CD4-positive, alpha-beta memory T cell (primary cell): ENCODE measurements at regions of chr6 and their contacts with region 1.

Region 1: DNA sequence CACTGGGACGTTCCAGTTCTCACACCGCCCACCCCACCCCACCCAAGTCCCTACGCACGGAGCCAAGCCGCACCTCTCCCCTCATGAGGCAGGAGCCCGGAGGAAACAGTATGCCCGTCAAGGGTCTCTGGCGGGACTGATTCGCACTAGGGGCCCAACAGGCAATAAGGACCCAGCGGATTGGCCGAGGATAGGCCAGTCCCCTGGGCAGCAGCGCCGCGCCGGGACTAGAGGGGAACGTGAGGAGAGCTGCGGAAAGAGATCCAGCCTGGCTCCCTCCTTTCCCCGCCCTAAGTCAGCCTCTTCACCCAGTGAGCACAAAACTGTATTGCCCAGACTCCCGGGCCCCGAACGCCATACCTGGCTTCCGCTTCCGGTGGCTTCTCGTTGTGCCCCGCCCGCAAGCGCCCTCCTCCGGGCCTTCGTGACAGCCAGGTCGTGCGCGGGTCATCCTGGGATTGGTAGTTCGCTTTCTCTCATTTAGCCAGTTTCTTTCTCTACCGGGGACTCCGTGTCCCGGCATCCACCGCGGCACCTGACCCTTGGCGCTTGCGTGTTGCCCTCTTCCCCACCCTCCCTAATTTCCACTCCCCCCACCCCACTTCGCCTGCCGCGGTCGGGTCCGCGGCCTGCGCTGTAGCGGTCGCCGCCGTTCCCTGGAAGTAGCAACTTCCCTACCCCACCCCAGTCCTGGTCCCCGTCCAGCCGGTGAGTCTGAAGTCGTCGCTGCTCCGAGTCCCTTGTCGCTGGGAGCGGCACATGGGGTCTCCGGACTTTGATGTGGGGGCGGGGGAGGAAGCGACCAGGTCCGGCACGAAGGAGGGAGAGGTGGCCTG is at the start of gene CSNK2B:
- DNase-seq: peak; percentile 97 to 99 (median 98)
- H3K4me3 ChIP-seq: peak within 1 kb of the TSS; percentile 94 to 96
- H3K4me3 Mint-ChIP-seq: peak within 1 kb of the TSS; percentile 89 to 100 (median 96)
- H3K27ac ChIP-seq: peak within 1 kb of the TSS; percentile 92
- H3K27ac Mint-ChIP-seq: peak within 1 kb of the TSS; percentile 94 to 100 (median 99)
- H3K4me1 ChIP-seq: peaks cover 59% of the 10 kb centered on the region
- H3K4me1 Mint-ChIP-seq: peaks cover 32 to 67% (median 49%) of the 10 kb centered on the region in 4 donors
- H3K27me3 ChIP-seq: no peaks in the 10 kb centered on the region
- H3K27me3 Mint-ChIP-seq: no peaks in the 10 kb centered on the region
- total RNA-seq, gene CSNK2B: 141 to 148 TPM

Region 2: GRCh38 chr6:31541658-31542521 is 123.8 kb before region 1 on chr6 and contains the start of gene DDX39B:
- CTCF ChIA-PET with region 1: interaction called, 3 read pairs
- POLR2A ChIA-PET with region 1: interaction called, 10 read pairs
- intact Hi-C with region 1: loop called (anchors 1 kb)
- DNase-seq: peak; percentile 95 to 97 (median 96)
- H3K4me3 ChIP-seq: peak within 1 kb of the TSS; percentile 96 to 97
- H3K4me3 Mint-ChIP-seq: peak within 1 kb of the TSS; percentile 96 to 99 (median 98)
- H3K27ac ChIP-seq: peak within 1 kb of the TSS; percentile 94
- H3K27ac Mint-ChIP-seq: peak within 1 kb of the TSS; percentile 94 to 100 (median 99)
- H3K4me1 ChIP-seq: peaks cover 48% of the 10 kb centered on the region
- H3K4me1 Mint-ChIP-seq: peaks cover 38 to 63% (median 51%) of the 10 kb centered on the region in 4 donors
- H3K27me3 ChIP-seq: no peaks in the 10 kb centered on the region
- H3K27me3 Mint-ChIP-seq: no peaks in the 10 kb centered on the region
- total RNA-seq, gene DDX39B: 729 to 737 TPM

Region 3: GRCh38 chr6:31680840-31681671 is 15.3 kb after region 1 on chr6 and contains the start of gene LY6G5C:
- CTCF ChIA-PET with region 1: interaction called, 8 read pairs
- POLR2A ChIA-PET with region 1: interaction called, 6 read pairs
- intact Hi-C with region 1: loop called (anchors 2 kb)
- DNase-seq: peak in 4 of 5 donors; percentile 51 to 59 (median 56)
- H3K4me3 ChIP-seq: peak within 1 kb of the TSS; percentile 69 to 70
- H3K4me3 Mint-ChIP-seq: peak within 1 kb of the TSS; percentile 86 to 91 (median 90)
- H3K27ac ChIP-seq: peak within 1 kb of the TSS; percentile 51
- H3K27ac Mint-ChIP-seq: peak within 1 kb of the TSS; percentile 77 to 92 (median 86)
- H3K4me1 ChIP-seq: peaks cover 19% of the 10 kb centered on the region
- H3K4me1 Mint-ChIP-seq: peaks cover 11 to 27% (median 16%) of the 10 kb centered on the region in 4 donors
- H3K27me3 ChIP-seq: no peaks in the 10 kb centered on the region
- H3K27me3 Mint-ChIP-seq: no peaks in the 10 kb centered on the region
- total RNA-seq, gene LY6G5C: 4.4 to 4.5 TPM

Region 4: DNA sequence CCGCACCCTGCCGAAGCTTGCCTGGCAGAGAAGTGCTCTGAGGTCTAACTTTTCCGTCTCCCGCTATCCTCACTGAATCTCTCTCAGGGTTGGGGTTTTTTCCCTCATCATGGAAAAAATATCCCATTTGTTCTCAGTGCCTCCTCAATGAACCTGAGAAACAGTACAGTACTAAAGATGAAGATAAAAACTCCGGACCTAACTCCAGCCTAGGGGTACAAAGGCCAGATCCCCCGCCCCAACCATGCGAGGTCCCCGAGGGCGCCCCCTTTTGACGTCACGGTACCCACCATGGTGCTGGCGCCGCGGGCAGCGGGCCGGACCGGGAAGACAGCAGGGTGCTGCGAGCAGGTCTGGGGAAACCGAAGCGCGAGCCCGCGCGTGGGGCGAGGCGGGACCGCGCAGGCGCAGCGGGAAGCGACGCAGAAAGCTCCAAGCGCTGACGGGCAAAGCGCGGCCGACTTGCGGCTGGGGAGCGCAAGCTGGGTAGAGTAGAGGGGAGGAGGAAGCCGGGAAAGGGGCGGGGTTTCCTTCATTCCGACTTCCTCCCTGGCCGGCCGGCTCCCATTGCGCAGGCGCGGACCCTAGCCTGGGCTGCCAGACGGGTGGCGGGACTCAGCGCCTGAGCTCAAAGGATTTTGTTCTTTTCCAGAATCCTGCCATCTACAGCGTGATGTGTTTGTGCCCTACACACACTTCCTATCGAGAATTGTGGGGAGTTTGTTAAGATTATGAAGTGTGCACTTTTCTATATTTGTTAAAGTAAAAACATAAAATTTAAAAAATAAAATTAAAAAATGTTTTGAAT is 140.9 kb after region 1 on chr6 and contains the start of gene LSM2:
- CTCF ChIA-PET with region 1: interaction called, 4 read pairs
- POLR2A ChIA-PET with region 1: interaction called, 11 read pairs
- intact Hi-C with region 1: no loop called
- DNase-seq: peak; percentile 97 to 98 (median 97)
- H3K4me3 ChIP-seq: peak within 1 kb of the TSS; percentile 84 to 89
- H3K4me3 Mint-ChIP-seq: peak within 1 kb of the TSS; percentile 86 to 97 (median 90)
- H3K27ac ChIP-seq: peak within 1 kb of the TSS; percentile 80
- H3K27ac Mint-ChIP-seq: peak within 1 kb of the TSS; percentile 89 to 97 (median 93)
- H3K4me1 ChIP-seq: peaks cover 23% of the 10 kb centered on the region
- H3K4me1 Mint-ChIP-seq: peaks cover 11 to 37% (median 27%) of the 10 kb centered on the region in 4 donors
- H3K27me3 ChIP-seq: no peaks in the 10 kb centered on the region
- H3K27me3 Mint-ChIP-seq: no peaks in the 10 kb centered on the region
- total RNA-seq, gene LSM2: 30.0 to 34.6 TPM

Region 5: GRCh38 chr6:31862344-31863227 is 196.9 kb after region 1 on chr6 and contains the start of gene NEU1:
- CTCF ChIA-PET with region 1: no interaction called
- POLR2A ChIA-PET with region 1: interaction called, 22 read pairs
- intact Hi-C with region 1: loop called (anchors 1 kb)
- DNase-seq: peak; percentile 97 to 100 (median 100)
- H3K4me3 ChIP-seq: peak within 1 kb of the TSS; percentile 88 to 95
- H3K4me3 Mint-ChIP-seq: peak within 1 kb of the TSS; percentile 87 to 96 (median 94)
- H3K27ac ChIP-seq: peak within 1 kb of the TSS; percentile 90
- H3K27ac Mint-ChIP-seq: peak within 1 kb of the TSS; percentile 94 to 98 (median 97)
- H3K4me1 ChIP-seq: peaks cover 16% of the 10 kb centered on the region
- H3K4me1 Mint-ChIP-seq: peaks cover 14 to 33% (median 23%) of the 10 kb centered on the region in 4 donors
- H3K27me3 ChIP-seq: no peaks in the 10 kb centered on the region
- H3K27me3 Mint-ChIP-seq: peaks cover 0 to 2% of the 10 kb centered on the region in 2 donors
- total RNA-seq, gene NEU1: 19.6 to 21.1 TPM

Region 6: DNA sequence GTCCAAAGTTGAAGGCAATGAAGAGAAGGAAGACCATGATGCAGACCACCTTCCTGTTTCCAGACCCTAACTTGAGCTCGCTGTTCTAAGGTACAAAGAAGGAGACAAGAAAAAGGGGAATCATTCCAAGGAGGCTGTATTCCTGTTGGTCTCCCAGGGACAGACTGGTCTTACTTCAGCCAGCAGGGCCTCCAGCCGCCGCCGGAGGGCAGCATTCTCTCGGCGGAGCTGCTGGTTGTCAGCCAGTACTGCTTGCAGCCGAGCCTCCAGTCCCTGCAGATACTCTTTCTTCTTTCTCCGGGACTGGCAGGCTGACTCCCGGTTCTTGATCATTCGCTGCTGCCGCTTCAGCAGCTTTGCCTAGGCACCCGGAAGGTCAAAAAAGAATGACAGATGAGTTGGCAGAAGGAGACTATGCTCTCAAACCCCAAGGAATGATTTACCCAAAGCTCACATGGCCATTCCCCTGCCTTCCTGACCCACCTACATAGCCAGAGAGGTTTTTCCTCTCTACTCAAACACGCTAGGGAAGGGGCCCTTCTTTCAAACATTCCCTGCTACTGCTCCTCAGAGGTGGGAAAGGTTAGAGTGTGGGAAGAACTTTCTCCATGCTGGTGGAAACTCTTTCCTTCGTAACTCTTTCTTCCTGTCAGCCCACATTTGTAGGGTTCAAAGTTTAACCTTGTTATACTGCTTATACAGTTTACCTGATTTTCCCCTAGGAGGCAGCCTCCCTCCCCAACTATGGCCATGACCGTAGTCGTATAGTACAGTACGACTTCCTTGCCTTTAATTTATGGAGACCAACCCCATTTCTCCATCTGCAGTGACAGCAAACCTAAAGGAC is 453.3 kb after region 1 on chr6:
- CTCF ChIA-PET with region 1: no interaction called
- POLR2A ChIA-PET with region 1: no interaction called
- intact Hi-C with region 1: no loop called
- DNase-seq: peak in 4 of 5 donors; percentile 59 to 65 (median 63)
- H3K4me3 ChIP-seq: no peak overlapping the region
- H3K4me3 Mint-ChIP-seq: no peak overlapping the region
- H3K27ac ChIP-seq: no peak overlapping the region
- H3K27ac Mint-ChIP-seq: peak overlapping the region in 6 of 7 donors; percentile 47 to 90 (median 72)
- H3K4me1 ChIP-seq: peaks cover 8% of the 10 kb centered on the region
- H3K4me1 Mint-ChIP-seq: peaks cover 3 to 19% (median 11%) of the 10 kb centered on the region in 4 donors
- H3K27me3 ChIP-seq: no peaks in the 10 kb centered on the region
- H3K27me3 Mint-ChIP-seq: no peaks in the 10 kb centered on the region

Region 7: DNA sequence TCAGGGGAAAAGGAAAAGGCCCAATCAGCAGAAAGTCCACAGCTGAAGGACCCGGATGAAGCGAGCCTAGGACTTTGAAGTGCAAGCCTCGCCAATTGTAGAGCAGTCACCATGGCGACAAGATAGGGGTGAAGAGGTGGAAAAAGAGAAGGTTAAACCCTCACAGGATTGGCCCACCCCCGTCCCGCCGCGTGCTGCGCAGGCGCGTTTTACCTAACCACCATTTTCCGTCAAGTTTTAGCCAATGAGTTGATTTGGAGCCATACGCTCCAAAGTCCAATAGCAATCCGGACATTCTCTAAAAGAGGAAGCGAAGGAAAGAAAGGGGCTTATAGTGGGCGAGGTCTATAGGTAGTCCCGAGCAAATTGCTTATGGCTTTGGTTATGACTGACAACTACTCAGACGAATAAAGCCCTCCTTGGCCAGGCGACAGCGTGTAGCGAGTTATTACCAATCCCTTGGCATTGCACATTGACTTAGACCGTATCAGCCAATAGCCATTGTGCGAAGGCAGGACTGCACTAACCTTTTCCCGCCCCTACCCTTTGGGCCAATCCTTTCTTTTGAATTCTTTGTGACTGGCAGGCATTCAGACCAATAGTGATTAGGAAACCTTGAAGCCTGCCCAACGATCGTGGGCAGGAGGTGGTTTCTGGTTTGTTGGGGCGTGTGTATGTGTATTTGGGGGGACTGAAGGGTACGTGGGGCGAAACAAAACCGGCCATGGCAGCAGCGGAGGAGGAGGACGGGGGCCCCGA is 512.2 kb after region 1 on chr6 and contains the start of gene RNF5:
- CTCF ChIA-PET with region 1: no interaction called
- POLR2A ChIA-PET with region 1: no interaction called
- intact Hi-C with region 1: loop called (anchors 2 kb)
- DNase-seq: peak; percentile 96 to 99 (median 98)
- H3K4me3 ChIP-seq: peak within 1 kb of the TSS; percentile 74 to 87
- H3K4me3 Mint-ChIP-seq: peak within 1 kb of the TSS; percentile 92 to 100 (median 96)
- H3K27ac ChIP-seq: peak within 1 kb of the TSS; percentile 91
- H3K27ac Mint-ChIP-seq: peak within 1 kb of the TSS; percentile 97 to 100 (median 99)
- H3K4me1 ChIP-seq: peaks cover 79% of the 10 kb centered on the region
- H3K4me1 Mint-ChIP-seq: peaks cover 50 to 84% (median 66%) of the 10 kb centered on the region in 4 donors
- H3K27me3 ChIP-seq: no peaks in the 10 kb centered on the region
- H3K27me3 Mint-ChIP-seq: no peaks in the 10 kb centered on the region
- total RNA-seq, gene RNF5: 44.2 to 47.7 TPM